ENCODE measurements at regions of chr15 and their contacts with region 1.

Region 1: DNA sequence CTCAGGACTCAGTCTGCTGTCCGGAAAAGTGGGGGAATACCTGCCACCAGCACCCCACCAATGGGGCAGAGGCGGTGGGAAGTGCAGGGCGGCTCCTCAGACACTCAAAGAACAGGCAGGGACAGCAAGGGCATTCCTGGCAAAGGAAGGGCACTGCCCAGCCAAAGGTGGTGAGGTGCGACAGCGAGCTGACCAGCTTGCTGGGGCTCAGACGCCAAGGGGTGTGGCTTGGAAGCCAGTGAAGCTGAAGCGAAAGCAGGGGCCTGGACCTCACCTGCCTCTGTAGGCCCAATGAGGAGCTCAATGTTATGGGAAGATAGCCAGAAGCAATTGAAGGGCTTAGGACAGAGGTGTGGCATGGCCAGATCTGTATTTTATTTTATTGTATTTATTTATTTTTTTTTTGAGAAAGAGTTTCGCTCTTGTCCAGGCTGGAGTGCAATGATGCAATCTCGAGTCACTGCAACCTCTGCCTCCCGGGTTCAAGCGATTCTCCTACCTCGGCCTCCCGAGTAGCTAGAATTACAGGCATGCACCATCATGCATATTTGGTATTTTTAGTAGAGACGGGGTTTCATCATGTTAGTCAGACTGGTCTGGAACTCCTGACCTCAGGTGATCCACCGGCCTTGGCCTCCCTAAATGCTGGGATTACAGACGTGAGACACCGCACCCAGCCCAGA is 4.4 kb upstream of the LMAN1L start:
- DNase-seq: no peak
- H3K4me3 ChIP-seq: no peak overlapping the region
- H3K4me3 Mint-ChIP-seq: no peak overlapping the region
- H3K27ac ChIP-seq: no peak overlapping the region
- H3K27ac Mint-ChIP-seq: peak overlapping the region; percentile 73 to 96 (median 84)
- H3K4me1 ChIP-seq: peaks cover 16% of the 10 kb centered on the region
- H3K4me1 Mint-ChIP-seq: peaks cover 26 to 35% (median 34%) of the 10 kb centered on the region in 3 donors
- H3K27me3 ChIP-seq: no peaks in the 10 kb centered on the region
- H3K27me3 Mint-ChIP-seq: no peaks in the 10 kb centered on the region

Region 2: DNA sequence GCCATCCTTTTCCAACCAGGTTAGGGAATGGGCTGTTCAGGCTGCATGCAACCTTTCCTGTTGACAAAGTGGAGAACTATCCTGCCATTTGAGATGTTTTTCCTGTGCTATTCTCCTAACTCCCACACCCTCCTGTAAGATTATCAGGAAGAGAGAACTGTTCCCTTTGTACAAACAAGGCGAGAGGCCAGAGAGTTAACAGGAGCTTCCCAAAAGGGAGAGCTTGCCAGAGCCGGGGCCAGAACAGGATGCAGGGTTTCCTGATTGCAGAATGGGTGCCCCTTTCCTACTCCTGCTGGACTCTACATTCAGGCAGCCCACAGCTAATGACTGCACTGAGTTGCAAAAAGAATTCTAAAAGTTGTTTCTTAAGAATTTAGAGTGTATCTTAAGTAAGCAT is 796.6 kb before region 1 on chr15:
- CTCF ChIA-PET with region 1: no interaction called
- POLR2A ChIA-PET with region 1: no interaction called
- DNase-seq: no peak
- H3K4me3 ChIP-seq: no peak overlapping the region
- H3K4me3 Mint-ChIP-seq: peak overlapping the region in 1 of 7 donors; percentile 38
- H3K27ac ChIP-seq: no peak overlapping the region
- H3K27ac Mint-ChIP-seq: peak overlapping the region in 1 of 8 donors; percentile 17
- H3K4me1 ChIP-seq: peaks cover 43% of the 10 kb centered on the region
- H3K4me1 Mint-ChIP-seq: peaks cover 54 to 77% (median 75%) of the 10 kb centered on the region in 3 donors
- H3K27me3 ChIP-seq: no peaks in the 10 kb centered on the region
- H3K27me3 Mint-ChIP-seq: no peaks in the 10 kb centered on the region

Region 3: GRCh38 chr15:74793135-74794028 is 14.8 kb before region 1 on chr15:
- CTCF ChIA-PET with region 1: interaction called, 32 read pairs
- POLR2A ChIA-PET with region 1: interaction called, 4 read pairs
- DNase-seq: peak; percentile 71 to 85 (median 74)
- H3K4me3 ChIP-seq: peak overlapping the region; percentile 46
- H3K4me3 Mint-ChIP-seq: peak overlapping the region; percentile 66 to 91 (median 85)
- H3K27ac ChIP-seq: no peak overlapping the region
- H3K27ac Mint-ChIP-seq: peak overlapping the region; percentile 81 to 98 (median 93)
- H3K4me1 ChIP-seq: peaks cover 99% of the 10 kb centered on the region
- H3K4me1 Mint-ChIP-seq: peaks cover 84 to 93% (median 89%) of the 10 kb centered on the region in 3 donors
- H3K27me3 ChIP-seq: no peaks in the 10 kb centered on the region
- H3K27me3 Mint-ChIP-seq: no peaks in the 10 kb centered on the region

Region 4: GRCh38 chr15:74884428-74885223 is 76.4 kb after region 1 on chr15:
- CTCF ChIA-PET with region 1: no interaction called
- POLR2A ChIA-PET with region 1: no interaction called
- DNase-seq: no peak
- H3K4me3 ChIP-seq: no peak overlapping the region
- H3K4me3 Mint-ChIP-seq: no peak overlapping the region
- H3K27ac ChIP-seq: no peak overlapping the region
- H3K27ac Mint-ChIP-seq: no peak overlapping the region
- H3K4me1 ChIP-seq: peaks cover 6% of the 10 kb centered on the region
- H3K4me1 Mint-ChIP-seq: peaks cover 14 to 21% (median 17%) of the 10 kb centered on the region in 3 donors
- H3K27me3 ChIP-seq: no peaks in the 10 kb centered on the region
- H3K27me3 Mint-ChIP-seq: no peaks in the 10 kb centered on the region